Ascending aorta (tissue), 2 donors: ENCODE measurements at regions of chr13 and their contacts with region 1.

Region 1: GRCh38 chr13:31797154-31797775 is 57.9 kb downstream of the RXFP2 start:
- DNase-seq: no peak
- H3K4me3 ChIP-seq: no peak overlapping the region
- H3K27ac ChIP-seq: no peak overlapping the region
- H3K4me1 ChIP-seq: no peaks in the 10 kb centered on the region
- H3K27me3 ChIP-seq: no peaks in the 10 kb centered on the region
- CTCF ChIP-seq: peak; percentile 33 to 64 (median 51)

Region 2: GRCh38 chr13:31431722-31432137 is 365.5 kb before region 1 on chr13:
- intact Hi-C with region 1: loop called (anchors 2 kb)
- DNase-seq: peak in 1 of 2 donors; percentile 76
- H3K4me3 ChIP-seq: no peak overlapping the region
- H3K27ac ChIP-seq: no peak overlapping the region
- H3K4me1 ChIP-seq: no peaks in the 10 kb centered on the region
- H3K27me3 ChIP-seq: no peaks in the 10 kb centered on the region
- CTCF ChIP-seq: peak in 2 of 3 experiments; percentile 85 to 86

Region 3: GRCh38 chr13:31538067-31539042 is 258.9 kb before region 1 on chr13:
- intact Hi-C with region 1: loop called (anchors 2 kb)
- DNase-seq: no peak
- H3K4me3 ChIP-seq: no peak overlapping the region
- H3K27ac ChIP-seq: no peak overlapping the region
- H3K4me1 ChIP-seq: no peaks in the 10 kb centered on the region
- H3K27me3 ChIP-seq: no peaks in the 10 kb centered on the region
- CTCF ChIP-seq: peak; percentile 15 to 42 (median 29)

Region 4: DNA sequence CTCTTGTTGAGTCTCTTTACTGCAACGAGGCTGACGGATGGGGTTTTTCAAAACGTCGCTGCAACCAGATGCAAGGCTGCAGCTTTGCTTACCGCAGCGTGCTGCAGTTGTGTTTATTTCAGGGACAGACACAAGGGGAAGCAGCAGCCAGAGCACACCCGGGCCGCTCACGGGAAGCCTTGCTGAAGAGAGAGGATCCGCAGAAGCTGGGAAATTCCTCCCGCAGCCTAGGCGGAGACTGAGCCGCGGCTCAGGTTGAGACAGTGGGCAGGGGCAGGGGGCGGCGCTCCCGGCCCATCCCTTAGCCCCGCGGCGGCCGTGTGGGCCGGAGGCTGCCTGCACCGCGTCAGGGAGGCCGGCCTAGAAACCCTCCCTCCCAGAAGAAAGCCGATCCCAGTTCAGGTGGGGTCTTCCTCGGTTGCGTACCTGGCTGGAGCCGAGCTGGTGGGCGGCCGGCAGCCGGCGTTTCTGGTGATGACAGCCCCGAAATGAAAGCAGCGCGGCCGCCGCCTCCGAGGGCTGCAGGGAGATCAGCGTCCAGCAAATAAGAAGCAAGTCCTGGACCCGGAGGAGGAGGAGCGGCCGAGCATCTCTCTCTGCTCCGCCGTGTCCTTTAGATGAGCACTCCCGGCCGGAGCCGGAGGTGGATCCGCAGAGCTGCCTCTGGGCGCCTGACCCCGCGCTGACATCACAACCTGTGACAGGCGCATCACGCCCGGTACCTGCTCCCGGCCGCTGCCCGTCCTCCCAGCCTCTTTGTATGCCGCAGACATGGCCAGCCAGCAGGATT is 234.0 kb after region 1 on chr13 and contains the start of gene FRY:
- intact Hi-C with region 1: no loop called
- DNase-seq: peak; percentile 20 to 74
- H3K4me3 ChIP-seq: peak within 1 kb of the TSS; percentile 65 to 95
- H3K27ac ChIP-seq: peak within 1 kb of the TSS; percentile 38 to 82
- H3K4me1 ChIP-seq: peaks cover 0 to 8% of the 10 kb centered on the region in 2 donors
- H3K27me3 ChIP-seq: no peaks in the 10 kb centered on the region
- CTCF ChIP-seq: peak in 1 of 3 experiments; percentile 29
- total RNA-seq, gene FRY: 115 TPM